ENCODE measurements at regions of chr22 and their contacts with region 1.

Region 1: DNA sequence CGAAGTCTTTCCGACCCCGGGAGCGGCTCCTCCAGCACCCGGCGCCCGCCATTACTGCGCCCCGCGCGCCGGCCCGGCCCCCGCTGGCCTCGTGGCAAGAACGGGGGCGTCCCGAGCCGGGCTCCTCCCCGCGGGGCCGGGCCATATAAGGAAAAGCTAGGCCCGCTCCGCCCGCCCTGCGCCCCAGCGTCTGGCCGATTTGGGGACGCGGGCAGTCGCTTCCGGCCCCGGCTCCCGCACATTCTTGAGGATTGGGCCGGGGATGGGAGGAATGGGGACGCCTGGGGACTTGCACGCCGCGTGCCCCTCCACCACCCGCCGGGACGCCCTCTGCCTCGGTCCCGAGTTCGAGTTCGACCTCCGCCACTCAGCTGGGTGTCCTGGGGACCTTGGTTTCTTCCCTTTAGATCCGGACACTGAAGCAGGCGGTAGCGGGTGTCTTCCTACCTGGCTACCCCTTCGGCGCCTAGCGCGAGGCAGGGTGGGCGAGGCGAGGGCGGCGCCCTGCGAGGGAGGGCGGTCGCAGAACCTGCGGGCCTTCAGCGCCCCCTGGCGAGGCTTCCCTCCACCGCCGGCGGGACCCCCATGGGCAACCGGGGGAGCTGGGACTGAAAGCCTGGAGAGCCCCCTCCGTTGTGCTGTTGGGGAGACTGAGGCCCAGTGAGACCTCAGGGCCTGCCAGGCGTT is 3.8 kb downstream of the SMTN start:
- DNase-seq: peak; percentile 94
- CTCF ChIP-seq: peak; percentile 87

Region 2: DNA sequence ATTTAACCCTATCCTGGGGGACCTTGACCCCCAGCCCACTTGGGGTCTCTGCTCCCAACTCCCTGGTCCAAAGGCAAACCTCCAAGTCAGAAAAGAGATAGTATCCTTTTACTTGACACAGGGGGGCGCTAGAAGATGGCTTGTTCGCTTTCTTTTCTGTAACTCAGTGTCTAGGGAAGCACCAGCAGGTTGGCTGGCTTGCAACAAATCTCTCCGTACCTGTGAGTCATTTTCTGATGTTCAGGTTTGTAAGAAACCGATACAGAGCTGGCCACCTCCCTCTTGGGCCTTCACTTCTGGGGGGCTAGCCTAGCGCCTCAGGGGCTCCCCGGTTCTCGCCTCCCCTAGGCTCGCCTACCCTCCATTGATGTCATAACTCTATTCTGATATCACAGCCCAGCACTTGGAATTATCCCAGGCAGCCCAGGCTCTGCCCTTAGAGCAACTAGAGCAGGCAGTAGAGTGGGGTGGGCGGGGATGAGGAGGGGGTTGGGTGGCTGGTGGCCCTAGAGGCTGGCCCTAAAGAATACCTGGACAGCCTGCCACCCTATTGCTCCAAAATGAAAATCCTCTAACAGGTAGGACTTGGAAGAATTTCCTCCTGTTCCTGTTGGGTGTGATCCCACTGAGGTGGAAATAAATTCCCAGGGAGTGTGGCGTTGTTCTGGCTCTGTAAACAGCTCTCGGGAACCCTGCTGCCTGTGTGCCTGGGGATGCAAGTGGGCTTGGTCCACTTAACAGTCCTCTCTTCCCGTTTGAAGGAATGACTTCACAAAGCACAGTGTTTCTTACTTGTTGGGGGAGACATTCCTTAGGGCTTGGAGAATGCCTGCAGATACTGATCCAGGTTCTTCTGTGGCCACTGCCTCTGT is 320.9 kb before region 1 on chr22:
- CTCF ChIA-PET with region 1: interaction called, 25 read pairs
- POLR2A ChIA-PET with region 1: no interaction called
- DNase-seq: peak; percentile 75
- CTCF ChIP-seq: peak; percentile 55

Region 3: GRCh38 chr22:30947816-30948454 is 137.0 kb before region 1 on chr22:
- CTCF ChIA-PET with region 1: interaction called, 20 read pairs
- POLR2A ChIA-PET with region 1: interaction called, 3 read pairs
- DNase-seq: no peak
- CTCF ChIP-seq: peak; percentile 48

Region 4: GRCh38 chr22:31107178-31107893 is 22.4 kb after region 1 on chr22 and contains the start of gene SELENOM:
- CTCF ChIA-PET with region 1: interaction called, 15 read pairs
- POLR2A ChIA-PET with region 1: interaction called, 3 read pairs
- DNase-seq: peak; percentile 96
- CTCF ChIP-seq: peak; percentile 71

Region 5: DNA sequence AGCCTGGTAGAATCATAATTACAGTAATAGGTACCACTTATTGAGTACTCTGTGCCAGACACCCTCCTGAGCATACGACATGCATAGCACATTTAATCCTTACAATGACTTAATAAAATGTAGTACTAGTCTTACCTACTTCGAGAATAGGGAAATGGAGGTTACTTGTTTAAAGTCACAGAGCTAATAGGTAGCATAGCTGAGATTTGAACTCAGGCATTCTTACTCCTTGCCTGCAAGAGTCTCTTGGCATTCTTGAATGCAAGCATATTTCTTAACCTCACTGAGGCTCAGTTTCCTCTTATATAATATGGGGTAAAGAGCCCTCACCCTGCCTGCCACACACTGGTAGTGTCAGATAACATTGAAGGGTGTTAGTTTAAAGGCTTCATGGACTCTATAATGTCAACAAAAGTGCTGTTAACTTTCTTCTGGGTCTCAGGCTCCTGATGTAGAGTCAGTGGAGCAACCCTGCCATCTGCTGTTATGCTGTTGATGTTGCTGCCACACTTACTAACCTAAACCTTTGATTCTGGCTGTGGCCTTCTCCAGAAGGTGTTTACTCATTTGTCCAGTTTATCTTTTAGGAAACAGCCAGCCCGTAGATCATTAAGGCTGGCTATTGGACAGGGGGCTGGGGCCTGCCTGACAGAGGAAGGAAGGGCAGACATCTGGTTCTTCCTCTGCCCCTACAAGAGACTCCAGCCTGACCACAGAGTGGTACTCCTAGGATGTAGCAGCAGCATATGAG is 146.1 kb after region 1 on chr22:
- CTCF ChIA-PET with region 1: interaction called, 14 read pairs
- POLR2A ChIA-PET with region 1: interaction called, 3 read pairs
- DNase-seq: peak; percentile 51
- CTCF ChIP-seq: peak; percentile 78